Dendritic cell treated with granulocyte-macrophage colony-stimulating factor and Interleukin-4, amounts not matched to agents 40 ng/mL and 50 ng/mL, for 4 days (primary cell): ENCODE measurements at regions of chr15 and their contacts with region 1.

Region 1: GRCh38 chr15:29747837-29748417 is 74.3 kb downstream of the TJP1 start:
- H3K4me3 Mint-ChIP-seq: no peak overlapping the region
- H3K27ac Mint-ChIP-seq: no peak overlapping the region
- H3K4me1 Mint-ChIP-seq: no peaks in the 10 kb centered on the region
- H3K27me3 Mint-ChIP-seq: peaks cover 2% of the 10 kb centered on the region

Region 2: DNA sequence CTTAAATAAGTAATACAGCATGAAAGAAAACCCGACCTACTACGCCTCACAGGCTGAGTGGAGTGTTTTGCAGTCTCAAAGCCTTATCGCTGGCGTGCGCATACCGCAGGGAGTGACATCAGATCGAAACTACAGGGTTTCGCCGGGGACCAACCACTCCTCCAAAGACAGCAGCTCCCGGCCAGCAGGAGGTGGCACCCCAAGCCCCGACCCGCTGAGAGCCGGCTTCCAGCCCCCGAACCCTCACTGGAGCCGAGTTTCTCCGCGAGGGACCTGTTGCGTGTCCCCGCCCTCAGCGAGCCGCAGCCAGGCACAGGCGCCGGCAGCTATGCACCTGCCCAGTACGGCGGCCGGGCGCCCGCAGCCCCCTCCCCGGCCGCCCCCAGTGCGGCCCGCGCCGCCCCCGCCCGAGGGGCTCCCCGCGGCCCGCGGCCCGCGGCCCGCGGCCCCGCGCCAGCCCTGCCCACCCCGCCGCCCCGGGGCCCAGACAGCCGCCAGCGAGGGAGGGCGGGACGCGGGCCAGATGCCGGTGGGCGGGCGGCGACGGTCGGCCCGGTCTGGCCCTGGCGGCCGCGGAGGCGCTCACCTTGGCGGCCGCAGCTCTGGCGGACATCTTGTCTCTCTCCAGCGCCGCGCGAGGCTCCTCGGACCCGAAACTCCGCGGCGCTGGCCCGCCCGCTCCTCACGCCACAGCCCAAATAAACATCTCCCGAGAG is 73.6 kb after region 1 on chr15:
- intact Hi-C with region 1: no loop called
- H3K4me3 Mint-ChIP-seq: peak overlapping the region; percentile 70
- H3K27ac Mint-ChIP-seq: no peak overlapping the region
- H3K4me1 Mint-ChIP-seq: peaks cover 6% of the 10 kb centered on the region
- H3K27me3 Mint-ChIP-seq: peaks cover 74% of the 10 kb centered on the region

Region 3: DNA sequence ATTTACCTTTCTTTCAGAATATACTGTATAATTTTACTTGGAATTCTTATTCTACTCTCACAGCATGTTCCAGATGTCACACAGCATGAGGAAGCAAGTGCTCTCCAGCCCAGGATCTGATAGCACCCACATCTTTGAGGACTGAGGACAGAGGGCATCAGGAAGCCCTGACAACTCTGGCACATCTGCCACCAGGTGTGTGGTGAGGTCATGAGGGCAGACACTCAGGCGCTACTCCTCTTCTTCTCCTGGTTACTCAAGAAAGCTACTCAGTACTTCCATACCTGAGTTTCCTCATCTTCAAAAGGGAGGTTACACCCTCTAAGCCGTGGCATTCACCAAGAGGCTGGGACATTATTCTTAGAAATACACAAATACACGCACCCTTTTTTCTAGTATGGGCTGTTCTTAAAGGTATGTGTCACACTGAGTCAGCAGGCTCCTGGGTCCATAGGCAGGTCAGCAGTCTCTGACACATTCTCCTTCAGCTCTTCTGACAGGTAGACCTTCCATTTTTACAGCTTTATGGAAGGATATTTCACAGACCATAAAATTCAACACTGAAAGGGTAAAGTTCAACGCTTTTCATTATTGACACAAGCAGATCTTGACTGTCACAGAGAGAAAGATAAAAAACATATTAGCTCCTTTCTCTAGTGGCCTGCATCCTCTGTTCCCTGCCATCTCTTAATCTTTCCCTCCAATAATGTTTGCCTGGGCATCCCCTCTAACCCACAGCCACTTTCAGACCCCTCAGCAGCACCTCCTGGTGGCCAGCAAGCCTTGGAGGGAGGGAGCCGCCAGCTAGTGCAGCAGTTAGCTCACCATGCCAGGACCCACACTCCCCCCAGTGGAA is 177.5 kb after region 1 on chr15:
- intact Hi-C with region 1: loop called (anchors 5 kb)
- H3K4me3 Mint-ChIP-seq: no peak overlapping the region
- H3K27ac Mint-ChIP-seq: no peak overlapping the region
- H3K4me1 Mint-ChIP-seq: no peaks in the 10 kb centered on the region
- H3K27me3 Mint-ChIP-seq: peaks cover 16% of the 10 kb centered on the region

Region 4: GRCh38 chr15:30073915-30074314 is 326.0 kb after region 1 on chr15:
- intact Hi-C with region 1: loop called (anchors 10 kb)
- H3K4me3 Mint-ChIP-seq: no peak overlapping the region
- H3K27ac Mint-ChIP-seq: no peak overlapping the region
- H3K4me1 Mint-ChIP-seq: no peaks in the 10 kb centered on the region
- H3K27me3 Mint-ChIP-seq: peaks cover 6% of the 10 kb centered on the region